A549 (cell line): ENCODE measurements at regions of chr3 and their contacts with region 1.

Region 1: DNA sequence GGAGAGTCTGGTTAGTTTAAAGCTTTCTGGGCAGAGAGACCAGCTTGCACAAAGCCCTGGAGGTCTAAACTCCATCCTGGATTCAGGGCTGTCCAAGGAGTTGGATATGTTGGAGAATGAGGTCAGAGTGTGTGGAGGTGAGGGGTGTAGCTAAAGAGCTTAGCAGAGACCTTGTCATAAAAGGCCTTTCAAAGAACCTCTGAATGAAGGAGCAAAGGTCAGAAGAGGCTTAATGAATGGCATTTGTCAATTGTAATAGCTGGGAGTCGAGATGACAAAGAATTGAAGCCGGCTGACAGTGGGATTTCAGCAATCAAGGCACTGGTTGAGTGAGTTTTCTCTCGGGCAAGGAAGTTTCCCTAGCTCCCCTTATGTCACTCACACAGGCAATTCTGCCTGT is 202.6 kb downstream of the PDCD6IP start:
- DNase-seq: no peak
- ATAC-seq: no peak; a peak in 1 of 6 replicates
- H3K4me3 ChIP-seq: no peak overlapping the region
- H3K27ac ChIP-seq: peak overlapping the region; percentile 12 to 14; a peak in 1 of 6 replicates
- H3K4me1 ChIP-seq: peaks cover 42% of the 10 kb centered on the region
- CTCF ChIP-seq: no peak
- EP300 ChIP-seq: no peak
- POLR2A ChIP-seq: no peak
- RAD21 ChIP-seq: no peak

Region 2: GRCh38 chr3:34012102-34012461 is 11.1 kb after region 1 on chr3:
- CTCF ChIA-PET with region 1: interaction called, 16 read pairs
- POLR2A ChIA-PET with region 1: interaction called, 10 read pairs
- DNase-seq: peak; percentile 97 to 98
- ATAC-seq: peak; percentile 94
- H3K4me3 ChIP-seq: no peak overlapping the region
- H3K27ac ChIP-seq: peak overlapping the region; percentile 81 to 91
- H3K4me1 ChIP-seq: peaks cover 58% of the 10 kb centered on the region
- CTCF ChIP-seq: no peak
- EP300 ChIP-seq: peak; percentile 86 to 88; a peak in 3 of 5 replicates
- POLR2A ChIP-seq: no peak
- RAD21 ChIP-seq: peak; percentile 47 to 66

Region 3: GRCh38 chr3:34090876-34091275 is 89.9 kb after region 1 on chr3:
- CTCF ChIA-PET with region 1: no interaction called
- POLR2A ChIA-PET with region 1: no interaction called
- DNase-seq: no peak
- ATAC-seq: no peak
- H3K4me3 ChIP-seq: no peak overlapping the region
- H3K27ac ChIP-seq: no peak overlapping the region
- H3K4me1 ChIP-seq: no peaks in the 10 kb centered on the region
- CTCF ChIP-seq: no peak
- EP300 ChIP-seq: no peak
- POLR2A ChIP-seq: no peak
- RAD21 ChIP-seq: no peak